ENCODE measurements at regions of chr11 and their contacts with region 1.

Region 1: GRCh38 chr11:76670485-76671236 is at the start of gene LRRC32:
- DNase-seq: no peak
- H3K4me3 Mint-ChIP-seq: peak within 1 kb of the TSS; percentile 84
- H3K27ac Mint-ChIP-seq: no peak within 1 kb of the TSS
- H3K4me1 Mint-ChIP-seq: peaks cover 60% of the 10 kb centered on the region
- H3K27me3 Mint-ChIP-seq: peaks cover 3% of the 10 kb centered on the region
- total RNA-seq, gene LRRC32: 26.5 and 26.7 TPM in 2 replicates

Region 2: DNA sequence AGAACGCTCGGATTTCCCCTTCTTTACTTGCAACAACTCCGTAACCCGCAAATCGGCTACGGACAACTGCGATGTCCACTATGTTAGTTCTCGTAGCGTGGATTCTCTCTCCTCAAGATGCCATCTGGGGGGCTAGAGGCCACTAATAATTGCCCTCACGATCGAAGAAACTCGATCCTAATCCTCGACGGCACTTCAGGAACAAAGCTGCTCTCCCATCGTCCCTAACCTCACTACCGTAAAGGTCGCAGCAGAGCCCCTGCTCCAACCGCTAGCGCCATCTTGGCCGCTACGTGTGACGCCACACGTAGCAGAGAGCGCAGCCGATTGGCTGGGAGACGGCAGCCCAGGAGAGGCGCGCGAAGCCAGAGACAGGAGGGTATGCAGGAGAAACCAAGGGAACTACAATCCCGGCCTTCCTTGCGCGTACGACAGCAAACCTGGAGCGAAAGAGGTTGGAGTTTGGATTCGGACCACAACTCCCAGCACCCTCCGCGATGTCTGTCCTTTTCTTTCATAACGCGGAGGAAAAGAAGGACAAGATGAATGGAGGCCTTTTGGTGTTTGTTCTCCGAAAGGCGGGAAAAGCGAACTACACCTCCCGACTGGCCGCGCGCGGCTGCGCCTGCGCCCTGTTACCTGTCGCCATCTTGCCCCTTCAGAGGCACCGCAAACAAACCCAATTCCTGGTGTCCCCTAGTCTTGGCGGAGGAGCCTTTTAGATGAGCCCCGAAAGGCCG is 226.1 kb before region 1 on chr11 and contains the start of gene EMSY:
- intact Hi-C with region 1: loop called (anchors 5 kb)
- DNase-seq: peak; percentile 93
- H3K4me3 Mint-ChIP-seq: peak within 1 kb of the TSS; percentile 95
- H3K27ac Mint-ChIP-seq: peak within 1 kb of the TSS; percentile 97
- H3K4me1 Mint-ChIP-seq: peaks cover 24% of the 10 kb centered on the region
- H3K27me3 Mint-ChIP-seq: no peaks in the 10 kb centered on the region
- total RNA-seq, gene EMSY: 31.5 and 32.0 TPM in 2 replicates

Region 3: DNA sequence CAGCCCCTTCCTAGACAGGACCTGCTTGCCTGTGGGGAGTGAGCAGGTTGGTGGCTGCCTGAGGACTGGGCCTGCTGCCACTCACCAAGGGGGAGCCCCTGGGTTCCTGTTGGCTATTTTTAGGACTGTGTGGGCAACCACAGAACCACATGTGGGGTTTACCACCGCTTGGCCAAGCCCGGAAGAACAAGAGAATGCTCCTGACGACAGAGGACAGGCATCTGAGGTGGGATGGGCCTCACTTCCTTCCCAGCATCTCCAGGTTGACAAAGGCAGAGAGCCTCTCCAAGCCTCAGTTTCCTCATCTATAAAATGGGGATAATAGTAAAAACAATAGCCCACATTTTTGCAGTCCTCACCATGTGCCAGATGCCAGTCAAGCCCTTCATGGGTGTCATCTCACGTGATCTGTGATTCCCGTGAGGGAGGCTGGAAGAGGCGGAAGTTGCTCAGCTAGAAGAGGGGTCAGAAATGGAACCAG is 43.7 kb before region 1 on chr11:
- intact Hi-C with region 1: loop called (anchors 2 kb)
- DNase-seq: peak; percentile 69
- H3K4me3 Mint-ChIP-seq: no peak overlapping the region
- H3K27ac Mint-ChIP-seq: peak overlapping the region; percentile 94
- H3K4me1 Mint-ChIP-seq: peaks cover 51% of the 10 kb centered on the region
- H3K27me3 Mint-ChIP-seq: no peaks in the 10 kb centered on the region